AG04449 (cell line): ENCODE measurements at regions of chr18 and their contacts with region 1.

Region 1: DNA sequence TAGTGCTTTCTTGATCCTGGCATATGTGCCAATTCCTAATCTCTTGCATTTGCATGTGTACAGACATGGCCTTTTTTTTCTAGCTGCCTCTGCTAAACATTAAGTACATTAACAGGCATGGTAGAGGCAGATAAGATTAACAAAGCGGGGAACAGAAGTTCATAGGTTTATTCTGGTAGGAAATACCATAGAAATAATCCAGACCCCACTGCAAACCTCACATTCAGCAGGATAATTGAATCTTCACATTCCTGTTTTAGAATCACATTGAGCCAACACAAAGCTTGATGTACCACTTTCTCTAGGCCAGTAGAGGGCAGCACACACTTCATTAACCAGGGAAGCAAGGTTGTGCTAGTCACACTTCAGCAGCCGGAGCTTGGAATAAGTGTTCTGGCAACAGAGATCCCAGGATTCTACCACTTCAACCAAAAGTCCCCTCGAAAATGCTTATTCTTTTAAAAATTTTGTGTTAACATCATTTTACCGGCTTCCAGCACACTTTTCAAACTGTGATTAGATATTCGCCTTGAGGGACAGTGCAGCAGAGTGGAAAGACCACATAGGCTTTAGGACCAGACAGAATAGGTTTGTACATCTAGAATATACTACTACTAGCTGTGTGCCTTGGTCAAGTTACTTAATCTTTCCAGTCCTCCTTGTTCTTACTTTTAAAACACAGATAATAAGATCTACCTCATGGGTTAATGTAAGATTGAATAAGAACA is 420.2 kb upstream of the CHST9 start:
- DNase-seq: peak; percentile 29
- H3K4me3 ChIP-seq: no peak overlapping the region
- CTCF ChIP-seq: peak; percentile 78

Region 2: DNA sequence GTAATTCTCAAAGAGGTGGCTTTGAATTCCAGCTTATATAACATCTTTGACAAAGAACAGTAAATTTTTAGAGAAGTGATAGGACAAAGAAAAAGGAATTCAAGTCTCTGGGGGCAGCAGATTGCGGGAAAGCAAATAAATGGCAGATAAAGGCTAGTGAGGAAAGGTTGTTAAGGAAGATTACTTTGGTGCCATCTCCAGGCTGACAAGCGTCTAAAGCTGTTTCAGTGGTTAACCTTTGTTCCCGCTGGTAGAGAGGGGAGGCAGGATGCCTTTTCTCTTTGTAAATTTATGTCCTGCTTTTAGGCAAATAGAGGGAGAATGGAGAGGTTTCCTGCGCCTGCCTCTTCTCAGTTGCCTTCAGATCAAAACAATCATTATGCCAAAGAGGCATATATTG is 11.1 kb after region 1 on chr18:
- CTCF ChIA-PET with region 1: interaction called, 167 read pairs
- POLR2A ChIA-PET with region 1: no interaction called
- DNase-seq: no peak
- H3K4me3 ChIP-seq: no peak overlapping the region
- CTCF ChIP-seq: no peak

Region 3: GRCh38 chr18:27685807-27686412 is 80.6 kb after region 1 on chr18:
- CTCF ChIA-PET with region 1: interaction called, 39 read pairs
- POLR2A ChIA-PET with region 1: no interaction called
- DNase-seq: no peak
- H3K4me3 ChIP-seq: no peak overlapping the region
- CTCF ChIP-seq: peak; percentile 55

Region 4: DNA sequence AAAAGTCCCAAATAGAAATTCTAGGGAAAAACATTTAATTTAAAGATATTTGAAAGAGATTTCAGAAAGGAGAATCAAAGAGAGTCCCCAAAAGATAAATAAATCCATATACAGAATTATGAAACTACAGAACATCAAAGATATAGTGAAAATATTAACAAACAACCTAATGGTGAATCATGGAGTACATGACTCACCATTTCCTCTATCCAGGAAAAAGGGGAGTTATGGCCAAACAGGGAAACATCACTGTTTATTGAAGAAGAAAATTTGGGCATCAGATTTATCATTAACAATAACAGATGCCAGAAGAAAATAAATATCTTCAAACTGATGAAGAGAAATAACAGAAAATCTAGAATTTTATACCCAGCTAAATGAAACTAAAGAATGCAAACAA is 123.4 kb after region 1 on chr18:
- CTCF ChIA-PET with region 1: interaction called, 13 read pairs
- POLR2A ChIA-PET with region 1: no interaction called
- DNase-seq: no peak
- H3K4me3 ChIP-seq: no peak overlapping the region
- CTCF ChIP-seq: no peak

Region 5: DNA sequence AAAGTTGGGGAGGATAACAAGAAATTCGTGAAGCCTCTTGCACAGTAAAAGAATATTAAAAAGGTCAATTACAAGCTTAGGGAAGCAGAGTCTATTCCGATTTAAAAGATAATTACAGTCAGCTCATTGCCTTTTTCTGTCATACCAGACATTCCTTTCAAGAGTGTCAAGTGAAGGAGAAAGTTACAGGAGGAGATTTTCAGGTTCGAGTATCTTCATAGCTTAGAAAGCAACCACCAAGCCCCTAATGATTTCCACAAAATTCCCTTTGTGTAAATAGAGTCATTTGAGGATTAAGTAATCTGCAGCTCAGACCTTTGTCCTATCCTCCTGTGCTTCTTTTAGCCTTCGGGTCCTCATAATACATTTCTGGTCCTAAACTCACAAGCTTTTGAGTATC is 156.8 kb after region 1 on chr18:
- CTCF ChIA-PET with region 1: interaction called, 162 read pairs
- POLR2A ChIA-PET with region 1: no interaction called
- DNase-seq: no peak
- H3K4me3 ChIP-seq: no peak overlapping the region
- CTCF ChIP-seq: no peak

Region 6: GRCh38 chr18:27983780-27984179 is 378.5 kb after region 1 on chr18:
- CTCF ChIA-PET with region 1: no interaction called
- POLR2A ChIA-PET with region 1: no interaction called
- DNase-seq: no peak
- H3K4me3 ChIP-seq: no peak overlapping the region
- CTCF ChIP-seq: no peak